ENCODE measurements at regions of chr5 and their contacts with region 1.

Region 1: DNA sequence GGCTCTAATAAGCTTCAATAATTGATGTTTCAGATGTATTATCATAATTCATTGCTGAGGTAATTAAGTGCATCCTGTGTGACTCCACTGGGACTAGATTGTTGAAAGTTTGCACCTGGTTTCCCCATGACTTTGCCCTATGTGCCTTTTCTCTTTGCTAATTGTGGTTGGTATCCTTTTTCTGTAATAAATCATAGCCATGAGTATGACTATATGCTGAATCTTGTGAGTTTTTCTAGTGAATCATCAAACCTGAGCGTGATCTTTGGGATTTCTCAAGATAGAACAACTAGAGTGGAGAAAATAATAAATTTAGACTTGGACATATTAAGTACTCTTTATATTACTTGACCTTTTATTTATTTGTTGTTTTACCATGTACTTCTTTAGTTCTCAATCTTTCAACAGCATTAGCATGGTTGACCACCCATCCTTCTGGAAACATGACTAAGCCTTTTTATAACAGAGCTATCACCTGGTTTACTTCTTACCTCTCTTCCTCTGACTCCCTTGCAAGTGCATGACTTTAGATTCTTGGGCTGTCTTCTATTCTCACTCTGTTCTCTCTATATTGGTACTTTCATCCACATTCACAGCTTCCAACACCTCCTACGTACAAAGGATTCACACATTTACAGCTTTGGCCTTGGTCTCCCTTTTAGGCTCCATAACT is 239.6 kb upstream of the TAS2R1 start:
- DNase-seq: no peak
- ATAC-seq: no peak
- H3K4me3 ChIP-seq: no peak overlapping the region
- H3K4me3 Mint-ChIP-seq: no peak overlapping the region
- H3K27ac ChIP-seq: no peak overlapping the region
- H3K27ac Mint-ChIP-seq: no peak overlapping the region
- H3K4me1 ChIP-seq: no peaks in the 10 kb centered on the region
- H3K4me1 Mint-ChIP-seq: no peaks in the 10 kb centered on the region
- H3K27me3 ChIP-seq: no peaks in the 10 kb centered on the region
- H3K27me3 Mint-ChIP-seq: no peaks in the 10 kb centered on the region

Region 2: DNA sequence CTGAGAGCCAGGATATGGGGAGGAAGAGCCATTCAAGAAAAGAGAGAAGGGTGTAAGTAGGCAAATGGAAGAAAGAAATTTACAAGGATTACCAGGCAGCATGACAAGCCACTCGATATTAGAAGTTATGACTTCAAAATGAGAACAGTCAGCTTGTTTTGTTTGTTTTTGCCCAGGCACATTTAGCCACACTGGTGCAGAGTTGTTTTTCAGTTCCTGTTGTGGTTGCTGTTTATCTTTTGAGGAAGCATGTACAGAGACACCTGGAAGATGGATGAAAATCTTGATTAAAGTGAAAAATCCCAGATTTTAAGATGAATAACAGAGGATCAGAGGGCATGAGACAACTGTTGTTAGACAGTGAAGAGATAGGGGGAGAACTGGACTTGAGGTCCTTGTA is 1801.7 kb before region 1 on chr5:
- CTCF ChIA-PET with region 1: no interaction called
- POLR2A ChIA-PET with region 1: no interaction called
- DNase-seq: no peak
- ATAC-seq: no peak
- H3K4me3 ChIP-seq: no peak overlapping the region
- H3K4me3 Mint-ChIP-seq: no peak overlapping the region
- H3K27ac ChIP-seq: no peak overlapping the region
- H3K27ac Mint-ChIP-seq: no peak overlapping the region
- H3K4me1 ChIP-seq: no peaks in the 10 kb centered on the region
- H3K4me1 Mint-ChIP-seq: no peaks in the 10 kb centered on the region
- H3K27me3 ChIP-seq: no peaks in the 10 kb centered on the region
- H3K27me3 Mint-ChIP-seq: no peaks in the 10 kb centered on the region

Region 3: DNA sequence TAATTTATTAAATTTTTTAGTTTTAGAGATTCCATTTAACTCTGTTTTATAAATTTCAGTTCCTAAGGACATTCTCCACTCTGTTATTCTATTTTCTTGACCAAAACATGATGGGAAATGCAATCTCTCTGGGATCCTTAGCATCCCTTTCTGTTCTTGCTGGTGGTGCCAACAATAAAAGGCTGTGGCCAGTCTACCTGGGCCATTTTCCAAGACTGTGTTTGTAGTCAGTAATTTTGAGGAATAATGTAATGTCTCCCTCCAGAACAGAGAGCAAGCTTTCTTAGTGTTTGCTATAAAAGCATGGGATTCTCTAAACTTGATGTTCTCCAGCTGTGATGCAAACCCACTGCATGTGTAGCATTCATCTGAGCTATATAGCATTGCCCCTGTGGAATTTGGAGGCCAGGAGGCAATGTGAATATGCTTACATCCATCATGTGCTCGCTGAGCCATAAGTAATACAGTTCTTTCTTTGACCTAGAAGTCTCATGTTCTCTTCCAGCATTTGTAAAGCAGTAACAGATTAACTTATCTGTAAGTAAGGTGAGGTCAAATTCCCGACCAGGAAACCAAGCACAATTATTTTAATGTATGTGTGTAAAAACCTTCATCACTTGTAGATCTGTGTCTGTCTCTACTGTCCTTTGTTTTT is 28.1 kb before region 1 on chr5:
- CTCF ChIA-PET with region 1: no interaction called
- POLR2A ChIA-PET with region 1: interaction called in 1 of 2 experiments, 11 read pairs
- DNase-seq: no peak
- ATAC-seq: no peak
- H3K4me3 ChIP-seq: no peak overlapping the region
- H3K4me3 Mint-ChIP-seq: no peak overlapping the region
- H3K27ac ChIP-seq: no peak overlapping the region
- H3K27ac Mint-ChIP-seq: no peak overlapping the region
- H3K4me1 ChIP-seq: no peaks in the 10 kb centered on the region
- H3K4me1 Mint-ChIP-seq: no peaks in the 10 kb centered on the region
- H3K27me3 ChIP-seq: no peaks in the 10 kb centered on the region
- H3K27me3 Mint-ChIP-seq: no peaks in the 10 kb centered on the region